ENCODE measurements at regions of chr2 and their contacts with region 1.

Region 1: GRCh38 chr2:110149330-110150220 is 34.0 kb upstream of the MALL start:
- DNase-seq: no peak
- ATAC-seq: no peak
- H3K4me3 ChIP-seq: no peak overlapping the region
- H3K4me3 Mint-ChIP-seq: no peak overlapping the region
- H3K27ac ChIP-seq: no peak overlapping the region
- H3K27ac Mint-ChIP-seq: no peak overlapping the region
- H3K4me1 ChIP-seq: no peaks in the 10 kb centered on the region
- H3K4me1 Mint-ChIP-seq: no peaks in the 10 kb centered on the region
- H3K27me3 ChIP-seq: no peaks in the 10 kb centered on the region
- H3K27me3 Mint-ChIP-seq: no peaks in the 10 kb centered on the region
- CTCF ChIP-seq: no peak

Region 2: GRCh38 chr2:110124939-110125691 is 24.5 kb before region 1 on chr2:
- CTCF ChIA-PET with region 1: no interaction called
- POLR2A ChIA-PET with region 1: no interaction called
- intact Hi-C with region 1: no loop called
- DNase-seq: no peak
- ATAC-seq: no peak
- H3K4me3 ChIP-seq: no peak overlapping the region
- H3K4me3 Mint-ChIP-seq: no peak overlapping the region
- H3K27ac ChIP-seq: no peak overlapping the region
- H3K27ac Mint-ChIP-seq: no peak overlapping the region
- H3K4me1 ChIP-seq: no peaks in the 10 kb centered on the region
- H3K4me1 Mint-ChIP-seq: no peaks in the 10 kb centered on the region
- H3K27me3 ChIP-seq: peaks cover 0 to 2% of the 10 kb centered on the region in 2 experiments
- H3K27me3 Mint-ChIP-seq: peaks cover 5% of the 10 kb centered on the region
- CTCF ChIP-seq: no peak

Region 3: DNA sequence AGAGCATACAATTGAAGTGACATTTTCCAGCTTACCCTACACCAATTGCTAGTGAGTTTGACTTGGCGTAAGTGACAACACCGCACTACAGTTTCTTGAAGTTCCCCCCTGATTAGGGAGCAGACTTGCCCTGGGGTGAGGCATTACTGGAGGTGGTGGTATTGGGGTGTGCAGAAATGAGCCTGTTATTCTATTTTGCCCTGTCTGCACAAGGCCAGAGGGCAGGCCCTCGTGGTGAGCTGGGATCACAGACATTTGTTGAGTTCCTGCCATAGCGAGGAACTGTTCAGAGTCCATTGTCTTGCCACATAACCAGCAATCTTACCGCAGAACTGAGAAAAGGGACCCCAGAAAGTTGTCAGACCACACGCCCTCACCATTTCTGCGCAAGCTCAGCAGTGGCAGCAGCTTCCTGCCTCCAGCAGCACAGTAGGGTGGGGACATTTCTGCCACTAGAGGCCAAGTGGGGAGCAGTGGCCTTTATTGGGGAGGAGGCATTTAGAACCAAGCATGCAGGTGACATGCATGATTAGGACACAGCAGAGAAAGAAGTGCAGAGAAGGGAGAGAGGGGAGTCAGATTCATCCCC is 867.6 kb after region 1 on chr2:
- CTCF ChIA-PET with region 1: no interaction called
- POLR2A ChIA-PET with region 1: no interaction called
- intact Hi-C with region 1: loop called in 1 of 2 experiments (anchors 5 kb)
- DNase-seq: peak in 1 of 14 experiments; percentile 30
- ATAC-seq: no peak
- H3K4me3 ChIP-seq: no peak overlapping the region
- H3K4me3 Mint-ChIP-seq: no peak overlapping the region
- H3K27ac ChIP-seq: no peak overlapping the region
- H3K27ac Mint-ChIP-seq: no peak overlapping the region
- H3K4me1 ChIP-seq: no peaks in the 10 kb centered on the region
- H3K4me1 Mint-ChIP-seq: no peaks in the 10 kb centered on the region
- H3K27me3 ChIP-seq: no peaks in the 10 kb centered on the region
- H3K27me3 Mint-ChIP-seq: no peaks in the 10 kb centered on the region
- CTCF ChIP-seq: no peak